H1 (cell line): ENCODE measurements at regions of chr1 and their contacts with region 1.

Region 1: GRCh38 chr1:117284399-117285215 is 73.9 kb upstream of the VTCN1 start:
- DNase-seq: no peak
- H3K4me3 ChIP-seq: no peak overlapping the region
- H3K27ac ChIP-seq: no peak overlapping the region
- H3K4me1 ChIP-seq: no peaks in the 10 kb centered on the region
- H3K27me3 ChIP-seq: no peaks in the 10 kb centered on the region
- CTCF ChIP-seq: peak in 2 of 3 experiments; percentile 67 to 76; a peak in 3 of 4 replicates
- EP300 ChIP-seq: no peak
- POLR2A ChIP-seq: no peak
- RAD21 ChIP-seq: peak; percentile 98 to 99

Region 2: GRCh38 chr1:117093870-117094621 is 190.6 kb before region 1 on chr1:
- CTCF ChIA-PET with region 1: interaction called, 52 read pairs
- POLR2A ChIA-PET with region 1: interaction called, 3 read pairs
- DNase-seq: no peak
- H3K4me3 ChIP-seq: no peak overlapping the region
- H3K27ac ChIP-seq: no peak overlapping the region
- H3K4me1 ChIP-seq: peaks cover 0 to 9% (median 2%) of the 10 kb centered on the region in 4 experiments; a peak in 2 of 7 replicates
- H3K27me3 ChIP-seq: no peaks in the 10 kb centered on the region
- CTCF ChIP-seq: peak in 2 of 3 experiments; percentile 10 to 40; a peak in 2 of 4 replicates
- EP300 ChIP-seq: no peak
- POLR2A ChIP-seq: no peak
- RAD21 ChIP-seq: peak; percentile 24 to 35; a peak in 2 of 4 replicates

Region 3: DNA sequence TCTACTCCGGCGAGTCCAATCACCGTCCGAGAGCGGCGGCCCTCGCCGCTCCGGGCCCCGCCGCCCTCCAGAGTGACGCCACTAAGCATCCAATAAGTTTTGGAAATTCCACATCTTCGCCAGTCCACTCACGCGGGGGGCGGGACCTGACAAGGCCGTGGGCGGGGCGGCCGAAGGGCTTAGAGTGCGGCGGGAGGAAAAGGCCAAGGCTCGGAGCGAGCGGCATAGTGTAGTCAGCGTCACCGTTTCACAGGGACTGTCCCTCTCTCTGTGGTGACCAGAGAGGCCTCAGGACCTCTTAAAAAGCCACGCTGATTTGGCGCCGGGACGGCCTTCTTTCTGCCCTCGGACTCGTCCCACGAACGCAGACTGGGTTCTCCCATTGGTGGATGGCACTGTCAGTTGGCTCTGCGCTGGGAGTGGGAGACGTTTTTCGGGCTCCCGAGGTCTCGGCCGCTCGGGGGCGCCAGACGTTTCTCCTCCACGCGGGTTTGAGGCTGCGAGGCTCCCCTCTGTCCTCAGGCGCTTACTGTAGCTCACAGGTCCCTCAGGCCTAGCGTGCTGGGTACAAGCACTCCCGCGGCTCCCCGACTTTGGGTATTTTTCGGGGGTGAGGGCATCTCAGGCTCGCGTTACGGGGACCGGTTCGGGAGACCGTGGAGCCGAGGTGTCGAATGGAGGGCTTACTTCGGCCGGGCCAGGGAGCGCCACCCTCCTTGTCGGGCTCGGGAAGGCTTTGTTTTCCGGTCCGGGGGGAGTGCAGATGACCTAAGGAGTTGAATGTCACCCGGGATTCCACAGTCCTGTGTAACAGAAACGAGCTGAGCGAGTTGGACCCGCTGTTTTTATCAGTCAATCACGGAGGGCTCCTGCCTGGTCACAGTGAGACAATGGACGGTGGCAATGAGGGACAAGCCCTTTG is 162.6 kb before region 1 on chr1:
- CTCF ChIA-PET with region 1: interaction called, 114 read pairs
- POLR2A ChIA-PET with region 1: interaction called, 8 read pairs
- DNase-seq: peak; percentile 77 to 93
- H3K4me3 ChIP-seq: peak overlapping the region; percentile 59 to 79 (median 75)
- H3K27ac ChIP-seq: peak overlapping the region; percentile 55
- H3K4me1 ChIP-seq: peaks cover 2 to 14% (median 8%) of the 10 kb centered on the region in 4 experiments
- H3K27me3 ChIP-seq: no peaks in the 10 kb centered on the region; a peak in 1 of 7 replicates
- CTCF ChIP-seq: peak; percentile 60 to 69 (median 65)
- EP300 ChIP-seq: no peak
- POLR2A ChIP-seq: peak; percentile 70
- RAD21 ChIP-seq: peak; percentile 61 to 76

Region 4: GRCh38 chr1:117142200-117142599 is 142.4 kb before region 1 on chr1:
- CTCF ChIA-PET with region 1: interaction called, 23 read pairs
- POLR2A ChIA-PET with region 1: interaction called, 3 read pairs
- DNase-seq: no peak
- H3K4me3 ChIP-seq: no peak overlapping the region
- H3K27ac ChIP-seq: no peak overlapping the region
- H3K4me1 ChIP-seq: peaks cover 0 to 8% (median under 1%) of the 10 kb centered on the region in 4 experiments; a peak in 4 of 7 replicates
- H3K27me3 ChIP-seq: no peaks in the 10 kb centered on the region
- CTCF ChIP-seq: no peak
- EP300 ChIP-seq: no peak
- POLR2A ChIP-seq: no peak
- RAD21 ChIP-seq: no peak

Region 5: DNA sequence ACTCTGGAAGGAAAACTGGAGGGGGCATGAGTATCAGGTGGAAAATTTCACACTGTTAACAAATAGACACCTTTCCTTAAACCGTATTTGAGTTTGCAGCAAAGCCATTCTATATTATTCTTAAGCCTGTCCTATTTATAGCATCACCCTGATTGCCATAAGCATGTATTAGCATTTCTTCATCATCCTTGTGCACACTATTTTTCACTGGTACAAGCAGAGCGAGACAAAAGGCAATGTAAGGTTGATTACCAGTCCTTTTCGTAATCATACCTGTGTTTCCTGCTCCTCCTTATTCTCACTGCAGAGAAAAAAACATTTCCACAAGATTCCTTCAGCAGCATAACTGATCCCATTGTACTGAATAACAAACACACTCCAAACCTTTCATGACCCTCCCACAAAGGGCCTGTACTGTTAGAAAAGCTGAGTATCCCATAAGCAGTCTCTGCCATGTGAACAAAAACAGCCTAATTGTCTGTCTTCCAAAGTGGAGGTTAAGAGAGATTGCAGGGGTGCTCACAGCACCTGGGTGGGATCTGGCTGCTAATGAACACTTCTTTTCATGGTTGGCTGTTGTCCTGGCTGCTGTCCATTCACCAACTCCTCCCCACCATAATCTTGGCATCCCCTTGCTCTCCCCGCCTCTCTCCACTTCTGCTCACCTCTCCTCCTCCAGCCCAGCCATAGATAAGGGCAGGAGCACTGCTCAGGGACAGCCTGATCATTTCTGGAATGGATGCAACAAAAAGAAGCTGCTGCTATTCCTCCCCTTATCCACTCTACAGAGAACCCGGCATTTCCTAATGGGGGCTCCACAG is 104.2 kb before region 1 on chr1:
- CTCF ChIA-PET with region 1: interaction called, 11 read pairs
- POLR2A ChIA-PET with region 1: no interaction called
- DNase-seq: no peak
- H3K4me3 ChIP-seq: no peak overlapping the region
- H3K27ac ChIP-seq: no peak overlapping the region
- H3K4me1 ChIP-seq: no peaks in the 10 kb centered on the region; a peak in 1 of 7 replicates
- H3K27me3 ChIP-seq: no peaks in the 10 kb centered on the region
- CTCF ChIP-seq: no peak
- EP300 ChIP-seq: no peak
- POLR2A ChIP-seq: no peak
- RAD21 ChIP-seq: no peak

Region 6: DNA sequence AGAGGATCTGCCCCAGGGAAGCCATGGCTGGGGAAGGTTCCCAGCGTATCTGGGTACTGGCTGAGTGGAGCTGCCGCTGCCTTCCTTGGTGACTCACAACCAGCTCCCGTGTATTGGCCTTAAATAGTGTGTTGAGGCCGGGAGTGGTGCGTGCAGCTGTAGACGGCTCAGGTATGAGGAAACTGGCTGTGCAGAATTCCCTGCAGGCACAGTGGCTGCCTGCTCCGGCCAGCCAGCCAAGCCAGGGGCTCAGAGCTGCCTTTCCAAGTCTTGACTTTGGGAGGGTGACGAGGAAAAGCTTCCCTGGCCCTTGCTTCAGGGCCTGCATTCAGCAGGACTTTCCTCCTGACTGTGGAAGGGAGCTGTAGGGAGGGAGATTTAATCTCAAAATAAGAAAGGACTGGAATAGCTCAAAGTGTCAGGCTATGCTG is 73.8 kb before region 1 on chr1 and contains the start of gene VTCN1:
- CTCF ChIA-PET with region 1: interaction called, 12 read pairs
- POLR2A ChIA-PET with region 1: no interaction called
- DNase-seq: no peak
- H3K4me3 ChIP-seq: no peak within 1 kb of the TSS
- H3K27ac ChIP-seq: no peak within 1 kb of the TSS
- H3K4me1 ChIP-seq: peaks cover 0 to 3% (median 1%) of the 10 kb centered on the region in 4 experiments; a peak in 3 of 7 replicates
- H3K27me3 ChIP-seq: no peaks in the 10 kb centered on the region
- CTCF ChIP-seq: no peak
- EP300 ChIP-seq: no peak
- POLR2A ChIP-seq: no peak
- RAD21 ChIP-seq: no peak
- total RNA-seq, gene VTCN1: 0.27 TPM in 1 of 2 replicates, not detected in the other

Region 7: DNA sequence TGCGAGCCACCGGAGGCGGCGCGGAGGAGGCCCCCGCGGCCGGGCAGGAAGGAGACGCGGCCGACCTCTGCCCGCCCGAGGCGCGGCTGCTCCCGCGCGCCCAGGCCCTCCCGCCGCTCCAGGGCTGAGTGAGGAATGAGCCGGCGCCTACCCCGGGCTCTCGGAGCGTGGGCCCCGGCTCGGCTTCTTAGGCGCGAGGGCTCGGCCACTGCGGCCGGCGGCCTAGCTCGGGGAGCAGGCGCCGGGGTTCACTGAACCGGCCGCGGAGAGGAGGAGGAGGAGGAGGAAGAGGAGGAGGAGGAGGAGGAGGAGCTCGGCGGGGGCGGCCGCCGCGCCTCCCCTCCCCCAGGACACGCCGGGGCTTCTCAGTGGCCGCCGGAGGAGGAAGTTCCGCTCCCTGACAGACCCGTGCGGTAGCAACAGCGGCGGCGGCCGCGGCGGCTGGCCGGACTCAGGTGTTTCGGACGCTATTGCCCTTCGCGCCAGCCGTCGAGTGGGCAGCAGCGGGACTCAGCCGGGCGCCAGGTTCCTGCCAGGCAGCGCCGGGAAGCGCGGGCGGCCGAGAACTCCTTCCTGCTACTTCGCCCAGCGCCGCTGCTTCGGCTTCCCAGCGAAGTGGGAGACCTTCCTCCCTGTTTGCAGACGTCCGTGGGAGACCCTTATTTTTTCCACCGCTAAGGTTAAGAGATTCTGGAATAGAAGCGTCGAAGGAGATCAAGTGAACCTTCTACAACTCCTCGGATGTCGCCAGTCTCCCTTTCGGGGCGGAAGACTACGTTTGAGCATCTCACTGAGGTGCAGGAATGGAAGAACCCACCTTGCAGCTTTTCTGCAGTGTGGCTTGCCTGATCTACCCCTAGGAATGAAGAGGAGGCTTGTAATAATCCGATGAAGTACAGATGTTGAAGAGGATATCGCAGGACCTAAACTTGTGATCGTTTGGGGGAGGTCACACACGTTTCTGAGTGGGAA is 82.7 kb after region 1 on chr1 and contains the start of gene MAN1A2:
- CTCF ChIA-PET with region 1: no interaction called
- POLR2A ChIA-PET with region 1: no interaction called
- DNase-seq: peak; percentile 36 to 82
- H3K4me3 ChIP-seq: peak within 1 kb of the TSS; percentile 55 to 87 (median 81)
- H3K27ac ChIP-seq: peak within 1 kb of the TSS; percentile 70
- H3K4me1 ChIP-seq: peaks cover 0 to 12% (median 3%) of the 10 kb centered on the region in 4 experiments; a peak in 4 of 7 replicates
- H3K27me3 ChIP-seq: no peaks in the 10 kb centered on the region; a peak in 1 of 7 replicates
- CTCF ChIP-seq: no peak
- EP300 ChIP-seq: no peak
- POLR2A ChIP-seq: no peak
- RAD21 ChIP-seq: no peak
- total RNA-seq, gene MAN1A2: 18.8 and 19.1 TPM in 2 replicates